ENCODE measurements at regions of chr3 and their contacts with region 1.

Region 1: DNA sequence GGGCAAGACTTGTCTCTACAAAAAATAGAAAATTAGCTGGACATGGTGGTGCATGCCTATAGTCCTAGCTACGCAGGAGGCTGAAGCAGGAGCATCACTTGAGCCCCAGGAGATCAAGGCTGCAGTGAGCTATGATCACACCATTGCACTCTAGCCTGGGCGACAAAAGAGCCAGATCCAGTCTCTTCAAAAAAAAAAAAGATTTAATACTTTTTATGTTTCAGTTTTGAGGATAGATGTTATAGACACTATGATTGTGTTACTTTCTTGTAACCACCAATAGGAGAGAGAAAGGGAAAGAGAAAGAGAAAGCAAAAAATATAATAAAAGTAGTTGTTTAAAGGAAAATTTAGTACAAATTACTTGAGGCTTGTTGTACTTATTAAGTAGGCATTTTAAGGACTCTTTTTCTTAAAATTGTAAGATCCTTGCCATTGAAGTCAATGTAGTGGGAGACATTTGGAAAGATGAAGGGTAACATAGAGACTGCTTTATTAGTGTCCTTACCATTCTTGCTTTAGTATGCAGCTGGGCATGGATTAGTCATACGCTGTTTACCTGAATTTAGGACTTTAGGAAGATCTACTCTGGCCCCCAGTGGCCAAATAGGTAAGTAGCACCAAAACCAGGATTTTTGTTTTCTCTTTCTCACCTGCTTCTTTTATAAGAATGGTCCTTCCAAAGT is 35.1 kb upstream of the ZDHHC23 start:
- DNase-seq: peak; percentile 48 to 79 (median 63)
- ATAC-seq: peak; percentile 99
- H3K4me3 ChIP-seq: no peak overlapping the region
- H3K27ac ChIP-seq: peak overlapping the region in 2 of 4 donors; percentile 17 to 35
- H3K4me1 ChIP-seq: peaks cover 6% of the 10 kb centered on the region
- H3K27me3 ChIP-seq: no peaks in the 10 kb centered on the region
- CTCF ChIP-seq: peak; percentile 39 to 92 (median 84)
- POLR2A ChIP-seq: no peak

Region 2: GRCh38 chr3:113736548-113737089 is 176.1 kb before region 1 on chr3:
- intact Hi-C with region 1: loop called (anchors 10 kb)
- DNase-seq: no peak
- ATAC-seq: peak; percentile 80
- H3K4me3 ChIP-seq: no peak overlapping the region
- H3K27ac ChIP-seq: peak overlapping the region in 1 of 4 donors; percentile 11
- H3K4me1 ChIP-seq: peaks cover 26% of the 10 kb centered on the region
- H3K27me3 ChIP-seq: no peaks in the 10 kb centered on the region
- CTCF ChIP-seq: peak; percentile 35 to 84 (median 69)
- POLR2A ChIP-seq: no peak

Region 3: DNA sequence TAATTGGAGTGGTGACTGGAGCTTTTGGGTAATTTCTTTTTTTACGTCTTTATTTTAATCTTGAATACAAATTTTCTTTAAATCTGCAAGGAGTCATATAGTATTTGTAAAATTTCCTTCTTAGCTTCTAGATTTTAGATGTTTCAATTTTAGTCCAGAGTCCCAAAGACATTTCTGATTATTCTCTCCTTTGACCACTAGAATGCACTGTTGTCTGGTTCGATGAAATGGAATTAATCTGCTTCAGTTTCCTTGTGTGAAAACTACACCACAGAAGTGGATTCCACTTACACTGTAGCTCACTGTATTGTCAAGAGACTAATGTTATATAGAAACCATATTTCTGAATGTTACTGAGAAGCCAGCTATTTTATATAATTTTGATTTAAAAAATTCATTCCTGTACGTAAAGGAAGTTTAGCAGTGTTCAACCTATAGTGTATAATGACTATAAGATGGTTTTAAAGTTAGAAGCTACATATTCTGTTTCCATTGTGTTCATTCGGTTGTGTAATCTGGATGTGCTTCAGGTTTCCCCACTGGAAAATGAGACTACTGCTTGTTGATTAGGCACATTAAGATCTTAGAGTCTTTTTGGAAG is 68.0 kb before region 1 on chr3:
- intact Hi-C with region 1: loop called (anchors 5 kb)
- DNase-seq: no peak
- ATAC-seq: peak; percentile 71
- H3K4me3 ChIP-seq: no peak overlapping the region
- H3K27ac ChIP-seq: no peak overlapping the region
- H3K4me1 ChIP-seq: no peaks in the 10 kb centered on the region
- H3K27me3 ChIP-seq: no peaks in the 10 kb centered on the region
- CTCF ChIP-seq: peak; percentile 32 to 82 (median 71)
- POLR2A ChIP-seq: no peak

Region 4: GRCh38 chr3:114207768-114208167 is 295.1 kb after region 1 on chr3:
- intact Hi-C with region 1: no loop called
- DNase-seq: no peak
- ATAC-seq: no peak
- H3K4me3 ChIP-seq: no peak overlapping the region
- H3K27ac ChIP-seq: no peak overlapping the region
- H3K4me1 ChIP-seq: no peaks in the 10 kb centered on the region
- H3K27me3 ChIP-seq: peaks cover 0 to 4% of the 10 kb centered on the region in 2 donors
- CTCF ChIP-seq: no peak
- POLR2A ChIP-seq: no peak

Measured in body of pancreas (tissue), 4 donors.